IMR-90 (cell line): ENCODE measurements at regions of chr10 and their contacts with region 1.

Region 1: DNA sequence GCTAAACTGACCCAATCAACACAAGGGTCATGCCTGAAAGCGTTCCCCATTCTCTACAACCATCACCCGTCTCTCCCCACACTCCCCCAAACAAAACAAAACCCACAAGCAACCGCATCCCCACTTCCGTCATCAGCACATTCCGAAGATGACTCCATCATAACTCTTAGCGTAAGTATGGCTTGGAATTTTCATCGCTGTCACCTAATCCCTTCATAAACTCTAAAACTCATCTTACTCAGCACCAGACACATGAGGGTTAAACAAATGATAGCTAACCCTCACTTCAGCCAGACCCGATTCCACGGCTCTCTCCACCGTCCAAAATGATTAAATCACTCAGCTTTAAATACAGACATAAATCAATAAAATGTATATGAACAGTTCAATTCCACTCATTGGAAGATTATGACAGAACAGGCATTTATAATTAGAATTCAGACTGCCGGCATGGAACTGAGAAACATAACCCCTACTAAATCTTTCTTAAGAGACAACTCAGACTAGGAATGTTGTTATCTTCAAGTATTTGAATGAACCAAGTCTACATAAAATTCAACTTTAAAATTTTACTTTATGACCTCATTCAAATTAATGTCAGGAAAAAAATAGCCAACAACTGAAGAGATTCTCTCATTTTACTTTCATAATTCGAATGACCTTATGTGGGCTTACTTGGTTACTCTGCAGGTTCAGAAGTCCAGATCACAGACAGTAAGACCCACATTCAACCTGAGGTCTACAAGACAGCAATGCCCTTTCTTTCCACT is 215.9 kb downstream of the PARD3 start:
- DNase-seq: peak; percentile 91
- ATAC-seq: peak; percentile 87
- H3K4me3 ChIP-seq: no peak overlapping the region; the same call in 1 of the 2 replicates
- H3K27ac ChIP-seq: peak overlapping the region; percentile 12; the same call in 1 of the 2 replicates
- H3K4me1 ChIP-seq: peaks cover 5% of the 10 kb centered on the region
- H3K27me3 ChIP-seq: no peaks in the 10 kb centered on the region
- CTCF ChIP-seq: no peak
- POLR2A ChIP-seq: no peak
- RAD21 ChIP-seq: no peak

Region 2: GRCh38 chr10:34528320-34528719 is 70.9 kb before region 1 on chr10:
- CTCF ChIA-PET with region 1: no interaction called
- POLR2A ChIA-PET with region 1: no interaction called
- dilution Hi-C with region 1: no loop called
- in situ Hi-C with region 1: no loop called
- intact Hi-C with region 1: loop called (anchors 5 kb)
- DNase-seq: peak; percentile 93
- ATAC-seq: peak; percentile 68
- H3K4me3 ChIP-seq: no peak overlapping the region
- H3K27ac ChIP-seq: no peak overlapping the region
- H3K4me1 ChIP-seq: peaks cover 14% of the 10 kb centered on the region
- H3K27me3 ChIP-seq: no peaks in the 10 kb centered on the region
- CTCF ChIP-seq: no peak
- POLR2A ChIP-seq: no peak
- RAD21 ChIP-seq: no peak

Region 3: DNA sequence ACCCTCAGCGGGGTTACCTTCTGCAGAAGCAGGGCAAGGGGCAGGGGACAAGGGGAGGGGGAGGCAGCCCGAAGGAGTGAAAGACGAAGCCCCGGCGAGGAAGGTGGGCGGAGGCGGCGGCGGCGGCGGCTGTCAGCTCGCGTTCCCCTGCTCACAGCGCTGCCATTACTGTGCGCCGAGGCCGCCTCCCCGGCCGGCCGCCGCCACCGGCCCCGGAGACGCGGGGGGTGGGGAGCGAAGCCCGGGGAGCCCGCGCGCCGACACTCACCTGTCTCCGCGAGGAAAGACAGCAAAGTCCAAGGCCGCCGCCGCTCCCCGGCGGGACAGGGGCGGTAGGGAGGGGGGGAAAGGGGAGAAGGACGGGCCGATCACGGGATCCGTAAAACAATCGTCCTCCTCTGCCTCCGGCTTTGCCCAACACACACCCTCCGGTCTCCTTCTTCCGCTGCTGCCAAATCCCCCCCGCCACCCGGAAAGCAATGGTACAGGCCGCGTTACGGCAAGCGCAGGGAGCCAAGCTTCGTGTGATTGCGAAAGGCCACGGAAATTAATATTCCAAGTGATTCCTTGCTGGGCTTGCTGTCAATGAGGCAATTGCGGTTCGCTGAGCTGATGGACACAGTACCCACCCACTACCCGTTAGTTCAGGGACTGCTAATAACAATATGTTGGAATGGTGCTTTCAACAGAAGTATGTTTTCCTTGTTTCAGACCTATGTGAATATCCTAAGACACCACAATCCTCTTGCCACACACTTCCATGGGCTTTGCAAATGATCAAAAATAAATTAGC is 491.1 kb after region 1 on chr10 and contains the start of gene CUL2:
- CTCF ChIA-PET with region 1: no interaction called
- POLR2A ChIA-PET with region 1: no interaction called
- dilution Hi-C with region 1: no loop called
- in situ Hi-C with region 1: no loop called
- intact Hi-C with region 1: no loop called
- DNase-seq: peak; percentile 96
- ATAC-seq: peak; percentile 98
- H3K4me3 ChIP-seq: peak within 1 kb of the TSS; percentile 88
- H3K27ac ChIP-seq: peak within 1 kb of the TSS; percentile 98
- H3K4me1 ChIP-seq: no peaks in the 10 kb centered on the region
- H3K27me3 ChIP-seq: no peaks in the 10 kb centered on the region
- CTCF ChIP-seq: no peak
- POLR2A ChIP-seq: no peak
- RAD21 ChIP-seq: no peak
- total RNA-seq, gene CUL2: 36.6 and 46.7 TPM in 2 replicates